ENCODE measurements at regions of chr6 and their contacts with region 1.

Region 1: DNA sequence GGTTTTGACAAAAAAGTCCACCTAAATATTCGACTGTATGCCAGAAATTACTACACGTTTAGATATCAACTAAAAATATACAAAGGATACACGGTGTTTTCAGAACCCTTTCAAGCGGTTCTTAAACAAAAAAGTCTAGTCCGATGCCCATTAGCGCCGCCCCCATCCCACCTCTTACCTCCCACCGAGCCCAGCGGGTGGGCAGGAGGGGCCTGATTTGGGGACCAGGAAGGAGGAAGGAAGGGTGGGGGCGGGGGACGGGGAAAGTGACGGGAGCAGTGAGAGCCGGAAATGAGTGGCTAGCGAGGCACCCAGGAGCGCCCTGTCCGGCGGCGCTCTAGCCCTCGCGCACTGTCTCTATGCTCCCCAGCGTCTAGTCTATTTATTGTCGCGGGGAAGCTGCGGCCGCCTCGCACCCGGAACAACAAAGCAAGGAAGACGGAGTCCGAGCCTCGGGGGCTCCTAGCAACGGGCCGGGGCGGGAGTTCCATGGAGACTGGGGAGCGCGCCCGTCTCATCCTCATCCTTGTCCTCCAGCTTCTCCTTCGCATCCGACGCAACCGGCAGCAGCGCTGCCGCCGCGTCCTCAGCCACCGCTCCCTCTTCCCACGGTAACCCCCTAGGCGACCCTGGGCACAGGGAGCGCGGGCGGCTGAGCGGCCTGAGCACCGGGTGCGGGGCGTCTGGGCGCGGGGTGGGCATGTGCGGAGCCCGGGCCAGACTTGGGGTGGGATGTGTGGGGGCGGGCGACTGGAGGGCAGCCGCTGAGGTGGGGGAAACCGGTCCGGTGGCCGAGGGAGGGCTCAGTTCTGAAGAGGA is at the start of gene TBPL1:
- DNase-seq: peak; percentile 60 to 81 (median 78)
- ATAC-seq: peak; percentile 95
- H3K4me3 ChIP-seq: peak within 1 kb of the TSS; percentile 85
- H3K4me3 Mint-ChIP-seq: peak within 1 kb of the TSS; percentile 96 to 100 (median 98)
- H3K27ac ChIP-seq: peak within 1 kb of the TSS; percentile 81
- H3K27ac Mint-ChIP-seq: peak within 1 kb of the TSS; percentile 83 to 99 (median 95)
- H3K4me1 ChIP-seq: peaks cover 10 to 25% of the 10 kb centered on the region in 2 donors
- H3K4me1 Mint-ChIP-seq: peaks cover 32 to 53% (median 45%) of the 10 kb centered on the region in 7 donors
- H3K27me3 ChIP-seq: no peaks in the 10 kb centered on the region
- H3K27me3 Mint-ChIP-seq: peaks cover 0 to 10% (median 0%) of the 10 kb centered on the region in 5 donors
- total RNA-seq, gene TBPL1: 21.0 to 34.7 (median 25.4) TPM

Region 2: GRCh38 chr6:132813173-132813856 is 1139.7 kb before region 1 on chr6:
- CTCF ChIA-PET with region 1: no interaction called
- POLR2A ChIA-PET with region 1: interaction called, 3 read pairs
- intact Hi-C with region 1: loop called (anchors 1 kb)
- DNase-seq: peak in 8 of 9 donors; percentile 31 to 71 (median 62)
- ATAC-seq: no peak
- H3K4me3 ChIP-seq: peak overlapping the region; percentile 90
- H3K4me3 Mint-ChIP-seq: peak overlapping the region; percentile 91 to 100 (median 98)
- H3K27ac ChIP-seq: peak overlapping the region; percentile 80
- H3K27ac Mint-ChIP-seq: peak overlapping the region; percentile 95 to 100 (median 98)
- H3K4me1 ChIP-seq: peaks cover 23 to 26% of the 10 kb centered on the region in 2 donors
- H3K4me1 Mint-ChIP-seq: peaks cover 29 to 54% (median 43%) of the 10 kb centered on the region in 7 donors
- H3K27me3 ChIP-seq: no peaks in the 10 kb centered on the region
- H3K27me3 Mint-ChIP-seq: peaks cover 0 to 30% (median 0%) of the 10 kb centered on the region in 5 donors

Region 3: GRCh38 chr6:133778414-133779130 is 174.5 kb before region 1 on chr6:
- CTCF ChIA-PET with region 1: no interaction called
- POLR2A ChIA-PET with region 1: no interaction called
- intact Hi-C with region 1: no loop called
- DNase-seq: no peak
- ATAC-seq: no peak
- H3K4me3 ChIP-seq: no peak overlapping the region
- H3K4me3 Mint-ChIP-seq: no peak overlapping the region
- H3K27ac ChIP-seq: no peak overlapping the region
- H3K27ac Mint-ChIP-seq: no peak overlapping the region
- H3K4me1 ChIP-seq: no peaks in the 10 kb centered on the region
- H3K4me1 Mint-ChIP-seq: peaks cover 0 to 6% (median 0%) of the 10 kb centered on the region in 7 donors
- H3K27me3 ChIP-seq: no peaks in the 10 kb centered on the region
- H3K27me3 Mint-ChIP-seq: peaks cover 0 to 6% (median 4%) of the 10 kb centered on the region in 5 donors

Region 4: GRCh38 chr6:133887156-133887879 is 65.7 kb before region 1 on chr6:
- CTCF ChIA-PET with region 1: no interaction called
- POLR2A ChIA-PET with region 1: no interaction called
- intact Hi-C with region 1: no loop called
- DNase-seq: no peak
- ATAC-seq: no peak
- H3K4me3 ChIP-seq: no peak overlapping the region
- H3K4me3 Mint-ChIP-seq: no peak overlapping the region
- H3K27ac ChIP-seq: no peak overlapping the region
- H3K27ac Mint-ChIP-seq: no peak overlapping the region
- H3K4me1 ChIP-seq: peaks cover 9 to 13% of the 10 kb centered on the region in 2 donors
- H3K4me1 Mint-ChIP-seq: peaks cover 12 to 37% (median 33%) of the 10 kb centered on the region in 7 donors
- H3K27me3 ChIP-seq: peaks cover 5 to 34% of the 10 kb centered on the region in 2 donors
- H3K27me3 Mint-ChIP-seq: peaks cover 75 to 88% (median 86%) of the 10 kb centered on the region in 5 donors

Region 5: DNA sequence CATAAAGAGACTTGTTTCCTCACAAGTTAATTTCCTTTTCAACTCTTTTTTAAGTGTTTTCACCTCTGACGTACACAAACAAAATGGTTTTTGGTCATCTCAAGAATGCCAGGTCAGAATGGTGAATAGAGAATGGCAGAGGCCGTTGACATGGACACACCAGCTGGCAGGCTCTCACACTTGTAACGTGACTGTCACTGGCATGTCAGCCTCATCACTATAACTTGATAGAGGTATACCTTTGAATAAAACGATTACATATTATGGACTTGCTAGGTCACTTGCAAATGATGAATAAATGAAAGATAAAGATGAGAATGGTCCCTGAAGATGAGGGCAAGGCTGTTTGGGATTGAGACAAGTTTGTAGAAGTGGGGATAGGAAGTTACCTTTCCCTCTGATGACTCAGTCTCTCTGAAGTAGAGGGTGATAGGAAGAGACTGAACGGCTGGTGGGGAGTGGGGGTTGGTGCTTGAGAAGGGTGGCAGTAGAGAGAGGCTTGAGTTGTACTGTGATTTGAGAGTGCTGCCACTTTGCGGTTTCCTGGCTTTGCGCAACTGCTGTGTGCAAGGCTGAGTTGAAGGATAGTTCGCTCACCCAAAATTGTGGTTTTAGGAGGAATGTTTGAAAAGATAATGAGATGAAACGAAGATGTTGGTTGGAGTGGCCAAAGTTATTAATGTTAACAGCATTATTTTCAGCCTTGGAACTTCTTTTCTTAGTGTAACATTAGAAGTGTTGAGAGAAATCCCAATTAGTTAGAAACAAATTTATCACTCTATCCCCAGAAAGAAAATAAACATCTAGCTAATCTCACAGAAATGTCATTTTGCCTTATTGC is 30.3 kb after region 1 on chr6:
- CTCF ChIA-PET with region 1: interaction called, 3 read pairs
- POLR2A ChIA-PET with region 1: no interaction called
- intact Hi-C with region 1: loop called in 1 of 2 experiments (anchors 1 kb)
- DNase-seq: peak in 8 of 9 donors; percentile 28 to 50 (median 42)
- ATAC-seq: peak; percentile 95
- H3K4me3 ChIP-seq: no peak overlapping the region
- H3K4me3 Mint-ChIP-seq: peak overlapping the region; percentile 2 to 79 (median 48)
- H3K27ac ChIP-seq: no peak overlapping the region
- H3K27ac Mint-ChIP-seq: peak overlapping the region in 6 of 9 donors; percentile 5 to 70 (median 23)
- H3K4me1 ChIP-seq: peaks cover 0 to 12% of the 10 kb centered on the region in 2 donors
- H3K4me1 Mint-ChIP-seq: peaks cover 29 to 57% (median 42%) of the 10 kb centered on the region in 7 donors
- H3K27me3 ChIP-seq: no peaks in the 10 kb centered on the region
- H3K27me3 Mint-ChIP-seq: no peaks in the 10 kb centered on the region

Region 6: GRCh38 chr6:135054569-135055498 is 1101.8 kb after region 1 on chr6 and contains the start of gene HBS1L:
- CTCF ChIA-PET with region 1: no interaction called
- POLR2A ChIA-PET with region 1: no interaction called
- intact Hi-C with region 1: loop called in 1 of 2 experiments (anchors 1 kb)
- DNase-seq: peak; percentile 93 to 98 (median 96)
- ATAC-seq: peak; percentile 97
- H3K4me3 ChIP-seq: peak within 1 kb of the TSS; percentile 96
- H3K4me3 Mint-ChIP-seq: peak within 1 kb of the TSS; percentile 89 to 100 (median 97)
- H3K27ac ChIP-seq: peak within 1 kb of the TSS; percentile 97
- H3K27ac Mint-ChIP-seq: peak within 1 kb of the TSS; percentile 97 to 100 (median 98)
- H3K4me1 ChIP-seq: peaks cover 10 to 13% of the 10 kb centered on the region in 2 donors
- H3K4me1 Mint-ChIP-seq: peaks cover 21 to 51% (median 46%) of the 10 kb centered on the region in 7 donors
- H3K27me3 ChIP-seq: no peaks in the 10 kb centered on the region
- H3K27me3 Mint-ChIP-seq: peaks cover 0 to 3% (median 0%) of the 10 kb centered on the region in 5 donors
- total RNA-seq, gene HBS1L: 70.0 to 112 (median 83.1) TPM

Region 7: DNA sequence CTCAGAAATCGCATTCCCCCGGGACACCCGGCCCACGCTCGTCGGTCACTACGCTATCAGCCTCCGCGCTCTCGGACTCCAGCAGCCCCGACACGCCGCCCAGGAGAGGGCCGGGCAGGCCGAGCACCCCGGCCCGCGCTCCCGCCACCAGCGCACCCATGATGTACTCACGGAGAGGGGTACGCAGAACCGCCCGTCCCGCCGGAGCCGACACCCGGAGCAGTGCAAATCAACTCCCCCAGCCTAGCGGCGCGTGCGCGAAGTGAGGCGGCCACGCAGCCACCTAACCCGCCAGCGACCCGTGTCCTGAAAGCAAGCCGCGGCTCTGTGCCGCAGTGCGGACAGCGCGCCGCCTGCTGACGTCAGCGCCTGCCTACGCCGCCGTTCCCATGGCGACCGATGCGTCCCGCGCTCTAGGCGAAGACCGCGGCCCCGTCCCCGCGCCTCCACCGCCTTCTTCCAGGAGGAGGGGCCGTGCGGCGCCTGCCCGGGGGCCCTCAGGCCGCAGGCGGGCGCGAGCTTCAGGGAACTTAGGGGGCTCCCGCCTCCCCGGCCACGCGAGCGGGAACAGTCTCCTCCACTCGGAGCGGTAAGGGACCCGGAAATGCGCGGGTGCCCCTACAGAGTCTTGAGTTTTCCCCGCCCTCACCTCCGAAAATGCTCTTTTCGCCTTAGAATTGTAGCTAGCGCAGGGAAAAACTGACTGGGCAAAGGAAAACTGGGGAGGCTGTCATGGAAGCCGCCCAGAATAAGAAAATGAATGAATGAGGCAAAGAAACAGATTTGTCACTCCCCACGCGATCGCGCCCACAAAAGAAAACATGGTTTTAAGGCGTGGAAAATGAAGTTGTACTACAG is 1544.6 kb after region 1 on chr6 and contains the start of gene AHI1:
- CTCF ChIA-PET with region 1: no interaction called
- POLR2A ChIA-PET with region 1: no interaction called
- intact Hi-C with region 1: loop called in 1 of 2 experiments (anchors 1 kb)
- DNase-seq: peak; percentile 65 to 94 (median 85)
- ATAC-seq: peak; percentile 89
- H3K4me3 ChIP-seq: peak within 1 kb of the TSS; percentile 64
- H3K4me3 Mint-ChIP-seq: peak within 1 kb of the TSS in 4 of 10 donors; percentile 32 to 53 (median 37)
- H3K27ac ChIP-seq: peak within 1 kb of the TSS; percentile 95
- H3K27ac Mint-ChIP-seq: no peak within 1 kb of the TSS
- H3K4me1 ChIP-seq: peaks cover 0 to 5% of the 10 kb centered on the region in 2 donors
- H3K4me1 Mint-ChIP-seq: peaks cover 4 to 19% (median 9%) of the 10 kb centered on the region in 7 donors
- H3K27me3 ChIP-seq: no peaks in the 10 kb centered on the region
- H3K27me3 Mint-ChIP-seq: peaks cover 0 to 3% (median 0%) of the 10 kb centered on the region in 5 donors
- total RNA-seq, gene AHI1: 12.5 to 31.3 (median 26.3) TPM

Measured in naive thymus-derived CD4-positive, alpha-beta T cell (primary cell).